Thyroid gland (tissue), 4 donors: ENCODE measurements at regions of chr9 and their contacts with region 1.

Region 1: DNA sequence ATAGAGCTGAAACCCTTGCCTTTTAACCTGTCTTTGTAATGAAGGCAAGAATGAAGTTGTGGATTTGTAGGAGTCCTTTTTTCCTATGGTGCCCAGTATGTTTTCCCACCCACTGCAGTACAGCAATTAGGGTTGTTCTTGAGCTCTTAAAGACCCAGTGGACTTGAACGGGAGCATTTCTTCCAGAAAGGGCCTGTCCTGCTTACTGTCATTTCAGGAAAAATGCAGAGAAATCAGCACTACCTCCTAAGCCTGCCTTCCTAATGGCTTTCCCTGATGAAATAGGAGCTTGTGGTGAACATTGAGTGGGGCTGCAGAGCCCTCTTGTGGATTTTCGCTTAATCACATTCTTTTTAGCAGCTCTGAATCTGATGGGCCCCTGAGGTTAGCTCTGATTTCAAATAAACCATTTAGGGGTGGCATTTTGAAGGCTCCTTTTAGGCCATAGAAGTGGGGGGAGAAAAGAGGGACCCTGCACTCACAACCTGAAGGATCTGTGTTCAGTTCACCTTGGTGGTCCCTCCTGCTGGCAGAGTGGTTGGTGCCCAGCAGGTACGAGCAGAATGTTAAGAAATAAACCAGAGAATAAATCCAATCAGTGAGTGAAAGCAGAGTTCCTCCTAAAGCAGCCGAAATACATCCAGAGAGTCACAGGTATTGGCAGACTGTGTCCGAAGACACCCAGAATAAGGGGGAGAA is 188.0 kb upstream of the KLF9 start:
- DNase-seq: peak; percentile 61 to 69
- H3K4me3 ChIP-seq: no peak overlapping the region
- H3K27ac ChIP-seq: peak overlapping the region; percentile 78 to 91 (median 87)
- H3K4me1 ChIP-seq: peaks cover 23 to 35% of the 10 kb centered on the region in 2 donors
- H3K27me3 ChIP-seq: no peaks in the 10 kb centered on the region
- CTCF ChIP-seq: peak; percentile 52 to 96 (median 81)
- POLR2A ChIP-seq: peak in 1 of 2 donors; percentile 18

Region 2: DNA sequence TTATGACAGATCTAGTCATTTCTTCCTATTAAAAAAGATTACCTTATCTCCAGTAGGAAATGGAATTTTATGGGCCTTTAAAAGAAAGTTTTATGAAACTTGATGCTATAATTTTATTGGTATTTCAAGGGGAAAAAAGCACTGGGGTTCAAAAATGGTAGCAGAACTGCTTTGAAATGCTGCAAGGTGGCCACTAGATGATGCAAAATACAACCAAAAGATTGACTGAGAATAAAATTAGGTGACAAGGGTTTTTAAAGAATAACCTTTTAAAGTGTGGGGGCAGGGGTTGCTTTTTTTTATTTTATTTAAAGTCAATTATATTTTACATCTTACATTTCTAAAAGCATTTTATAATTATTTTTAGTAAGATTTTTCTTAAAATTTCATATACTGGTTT is 249.7 kb before region 1 on chr9:
- intact Hi-C with region 1: loop called (anchors 5 kb)
- DNase-seq: no peak
- H3K4me3 ChIP-seq: no peak overlapping the region
- H3K27ac ChIP-seq: no peak overlapping the region
- H3K4me1 ChIP-seq: no peaks in the 10 kb centered on the region
- H3K27me3 ChIP-seq: no peaks in the 10 kb centered on the region
- CTCF ChIP-seq: peak; percentile 47 to 85 (median 70)
- POLR2A ChIP-seq: no peak

Region 3: DNA sequence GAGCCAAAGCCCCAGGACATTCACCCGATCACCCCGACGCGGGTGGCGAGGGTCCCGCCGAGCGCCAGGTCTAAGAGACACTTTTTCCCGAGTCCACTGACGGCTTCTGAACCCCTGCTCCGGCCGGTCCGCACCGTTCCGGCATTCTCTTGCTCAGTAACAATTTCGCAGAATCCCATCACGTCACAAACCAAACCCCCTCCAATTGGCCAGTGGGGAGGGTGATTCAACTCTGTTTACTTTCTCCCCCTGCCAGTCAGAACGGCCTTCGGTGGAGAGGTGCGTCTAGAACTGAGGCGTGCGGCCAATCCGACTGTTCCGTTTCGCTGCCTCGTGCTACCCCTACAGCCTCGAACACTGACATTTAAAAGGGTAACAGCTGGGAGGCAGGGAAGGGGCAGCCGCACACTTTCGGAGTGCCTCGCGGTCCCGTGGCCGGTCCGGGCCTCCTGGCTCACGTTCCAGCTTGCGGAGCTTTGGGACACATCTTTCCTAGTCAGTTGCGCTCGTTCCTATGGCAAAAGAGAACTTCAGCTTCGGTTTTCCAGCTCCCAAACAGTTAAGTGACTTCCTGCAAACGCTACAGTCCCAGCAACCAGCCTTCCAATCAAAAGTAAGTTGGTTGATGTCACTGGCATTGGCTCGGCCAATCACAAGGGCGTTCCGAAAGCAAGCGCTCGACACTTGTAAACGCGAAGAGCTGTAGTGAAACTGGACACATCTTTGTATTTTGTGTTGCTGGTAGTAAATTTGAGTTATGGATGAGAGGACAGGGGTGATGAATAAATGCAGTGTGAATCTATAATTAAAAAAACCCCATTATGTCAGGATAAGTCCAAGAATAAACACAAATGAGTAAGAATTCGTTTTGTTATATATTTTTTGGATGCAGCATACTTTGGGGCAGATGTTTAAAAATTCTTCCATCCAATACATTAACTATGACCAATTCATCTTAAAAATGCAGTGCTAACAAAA is 188.4 kb before region 1 on chr9 and contains the start of gene KLF9:
- intact Hi-C with region 1: loop called (anchors 10 kb)
- DNase-seq: peak; percentile 94
- H3K4me3 ChIP-seq: peak within 1 kb of the TSS; percentile 83 to 98 (median 90)
- H3K27ac ChIP-seq: peak within 1 kb of the TSS; percentile 100
- H3K4me1 ChIP-seq: peaks cover 49% of the 10 kb centered on the region in 2 donors
- H3K27me3 ChIP-seq: no peaks in the 10 kb centered on the region
- CTCF ChIP-seq: peak in 2 of 6 experiments; percentile 4 to 10
- POLR2A ChIP-seq: peak; percentile 74 to 94
- total RNA-seq, gene KLF9: 96.3 to 155 (median 125) TPM